Activated B cell treated with CpG ODN at 0.5 μM for 24 hours (primary cell): ENCODE measurements at regions of chr17 and their contacts with region 1.

Region 1: DNA sequence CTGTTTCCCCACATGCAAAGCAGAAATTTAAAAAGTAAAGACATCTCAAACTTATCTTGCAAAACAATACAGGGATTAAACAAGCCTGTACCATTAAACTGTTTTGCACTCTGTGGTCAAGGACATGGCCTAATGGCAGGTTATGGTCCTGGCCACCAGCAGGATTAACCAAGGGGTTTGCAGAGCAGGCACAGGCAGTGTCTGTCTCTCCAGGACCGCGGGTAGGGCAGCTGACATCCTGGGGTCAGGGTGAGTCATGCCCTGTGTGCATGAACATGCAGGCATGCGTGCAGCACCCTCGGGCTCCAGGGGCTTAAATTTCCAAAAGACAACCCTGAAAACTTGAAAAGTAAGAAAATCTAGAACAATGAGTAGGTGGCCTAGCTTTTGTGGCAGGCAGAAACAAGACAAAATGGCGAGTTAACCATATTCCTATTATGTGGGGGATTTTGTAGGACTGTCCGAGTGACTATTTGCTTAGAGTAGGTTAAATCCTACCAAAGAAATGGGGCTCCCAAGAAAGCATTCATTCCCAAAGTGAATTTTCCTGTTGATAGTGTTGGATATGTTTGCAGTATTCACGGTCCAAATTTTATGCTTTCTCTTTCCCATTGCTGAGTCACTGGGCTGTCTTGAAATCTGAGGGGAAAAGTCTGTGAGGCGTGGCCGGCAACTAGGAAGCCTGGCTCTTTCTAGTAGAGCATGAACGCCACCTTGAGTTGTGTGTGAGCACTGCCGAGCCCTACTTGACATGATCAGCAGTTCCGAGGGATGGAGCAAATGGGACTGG is 158.4 kb upstream of the FAM20A start:
- DNase-seq: no peak
- ATAC-seq: peak; percentile 60
- H3K4me3 Mint-ChIP-seq: no peak overlapping the region
- H3K27ac Mint-ChIP-seq: no peak overlapping the region
- H3K4me1 Mint-ChIP-seq: peaks cover 6% of the 10 kb centered on the region
- H3K27me3 Mint-ChIP-seq: peaks cover 2% of the 10 kb centered on the region
- CTCF ChIP-seq: no peak

Region 2: GRCh38 chr17:68539548-68540467 is 219.7 kb before region 1 on chr17:
- CTCF ChIA-PET with region 1: no interaction called
- POLR2A ChIA-PET with region 1: no interaction called
- intact Hi-C with region 1: loop called (anchors 2 kb)
- DNase-seq: no peak
- ATAC-seq: peak; percentile 72
- H3K4me3 Mint-ChIP-seq: no peak overlapping the region
- H3K27ac Mint-ChIP-seq: peak overlapping the region; percentile 61
- H3K4me1 Mint-ChIP-seq: peaks cover 15% of the 10 kb centered on the region
- H3K27me3 Mint-ChIP-seq: no peaks in the 10 kb centered on the region
- CTCF ChIP-seq: no peak